Head of caudate nucleus (tissue), 42 donors: ENCODE measurements at regions of chr2 and their contacts with region 1.

Region 1: GRCh38 chr2:205925373-205926337 is 160.3 kb downstream of the INO80D start:
- DNase-seq: peak; percentile 47 to 91 (median 78)

Region 2: GRCh38 chr2:205590759-205591158 is 334.9 kb before region 1 on chr2:
- intact Hi-C with region 1: no loop called
- DNase-seq: no peak

Region 3: GRCh38 chr2:205766779-205767359 is 158.8 kb before region 1 on chr2:
- intact Hi-C with region 1: loop called (anchors 10 kb)
- DNase-seq: peak; percentile 51 to 90 (median 78)